CD4-positive, alpha-beta T cell (primary cell): ENCODE measurements at regions of chr1 and their contacts with region 1.

Region 1: DNA sequence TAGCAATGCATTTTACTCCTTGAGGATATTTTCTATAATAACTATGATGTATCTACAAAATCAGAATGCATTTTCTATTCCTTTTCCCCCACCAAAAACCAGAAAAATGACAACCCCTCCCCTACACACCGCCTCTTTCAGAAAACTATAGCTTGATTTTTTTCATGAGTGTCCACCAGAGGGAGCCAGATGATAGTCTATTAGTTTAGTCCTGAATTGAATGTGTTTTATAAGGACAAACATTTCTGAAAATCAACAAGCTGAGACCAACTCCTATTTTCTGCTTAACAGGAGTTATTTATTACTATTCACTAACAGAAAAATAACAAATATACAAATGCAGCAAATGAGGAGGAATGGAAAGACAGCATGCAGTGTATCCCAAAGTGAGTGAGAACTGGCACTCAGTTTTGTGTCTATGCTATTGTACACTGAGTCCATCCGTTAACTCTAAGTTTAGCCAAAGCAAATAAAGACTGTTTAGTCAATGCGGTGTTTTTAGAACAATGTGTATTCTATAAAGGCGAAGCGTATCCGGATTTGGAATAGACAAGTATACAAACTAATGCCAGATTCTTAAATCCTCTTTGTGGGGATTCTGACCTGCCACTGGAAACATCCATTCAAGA is 182.6 kb downstream of the VAV3 start:
- DNase-seq: peak in 8 of 14 experiments; percentile 16 to 84 (median 52)
- ATAC-seq: no peak
- H3K4me3 ChIP-seq: no peak overlapping the region
- H3K4me3 Mint-ChIP-seq: no peak overlapping the region
- H3K27ac ChIP-seq: no peak overlapping the region
- H3K27ac Mint-ChIP-seq: no peak overlapping the region
- H3K4me1 ChIP-seq: peaks cover 17% of the 10 kb centered on the region
- H3K4me1 Mint-ChIP-seq: peaks cover 30% of the 10 kb centered on the region
- H3K27me3 ChIP-seq: no peaks in the 10 kb centered on the region
- H3K27me3 Mint-ChIP-seq: no peaks in the 10 kb centered on the region
- CTCF ChIP-seq: peak; percentile 86

Region 2: DNA sequence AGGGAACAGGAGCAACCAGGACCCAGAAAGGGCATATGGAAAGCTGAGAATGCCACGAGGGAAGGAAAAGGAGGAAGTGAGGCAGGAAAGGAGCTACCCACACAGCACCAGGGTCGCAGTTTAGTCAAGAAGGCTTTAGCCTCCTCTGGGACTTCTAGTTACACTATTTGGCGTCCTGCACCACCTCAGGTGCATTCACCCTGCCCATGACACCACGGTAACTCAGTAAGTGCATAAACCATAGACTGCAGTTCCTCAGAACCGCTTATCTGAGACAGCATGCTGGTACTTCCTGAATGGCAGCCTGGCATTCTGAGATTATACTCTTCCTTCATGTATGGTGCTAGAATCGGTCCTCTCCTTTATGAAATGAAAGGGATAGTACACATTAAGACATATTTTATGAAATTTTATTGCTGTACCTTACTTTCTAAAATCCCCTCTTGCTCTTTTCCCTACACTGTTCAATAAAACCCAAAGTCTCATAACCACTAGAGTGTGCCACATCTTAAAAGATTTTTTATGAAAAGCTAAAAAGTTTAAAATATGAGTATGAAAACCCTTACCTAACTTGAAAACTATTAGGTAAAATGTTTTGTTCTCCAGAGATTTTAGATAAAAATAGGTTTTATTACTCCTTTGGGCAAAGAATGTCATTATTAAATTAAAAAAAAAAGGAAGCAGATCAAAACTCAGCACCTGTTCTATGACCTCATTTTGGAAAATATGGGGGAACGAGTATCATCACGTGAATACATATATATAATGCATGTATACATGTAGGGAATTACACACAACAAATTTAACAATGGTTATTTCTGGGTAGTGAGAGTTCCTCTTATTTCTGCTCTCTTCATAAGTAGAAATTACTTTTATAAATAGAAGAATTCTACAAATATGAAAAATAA is 115.4 kb after region 1 on chr1:
- CTCF ChIA-PET with region 1: no interaction called
- POLR2A ChIA-PET with region 1: no interaction called
- intact Hi-C with region 1: loop called (anchors 1 to 10 kb)
- DNase-seq: peak in 4 of 14 experiments; percentile 10 to 33 (median 20)
- ATAC-seq: peak; percentile 72
- H3K4me3 ChIP-seq: no peak overlapping the region
- H3K4me3 Mint-ChIP-seq: peak overlapping the region; percentile 56
- H3K27ac ChIP-seq: no peak overlapping the region
- H3K27ac Mint-ChIP-seq: peak overlapping the region; percentile 9
- H3K4me1 ChIP-seq: peaks cover 6% of the 10 kb centered on the region
- H3K4me1 Mint-ChIP-seq: peaks cover 39% of the 10 kb centered on the region
- H3K27me3 ChIP-seq: no peaks in the 10 kb centered on the region
- H3K27me3 Mint-ChIP-seq: no peaks in the 10 kb centered on the region
- CTCF ChIP-seq: no peak

Region 3: GRCh38 chr1:107963601-107964335 is 181.4 kb after region 1 on chr1:
- CTCF ChIA-PET with region 1: interaction called, 4 read pairs
- POLR2A ChIA-PET with region 1: interaction called, 7 read pairs
- intact Hi-C with region 1: loop called (anchors 1 to 5 kb)
- DNase-seq: peak in 11 of 14 experiments; percentile 10 to 72 (median 27)
- ATAC-seq: peak; percentile 64
- H3K4me3 ChIP-seq: peak overlapping the region; percentile 85
- H3K4me3 Mint-ChIP-seq: peak overlapping the region; percentile 91
- H3K27ac ChIP-seq: peak overlapping the region; percentile 6 to 48
- H3K27ac Mint-ChIP-seq: peak overlapping the region; percentile 91
- H3K4me1 ChIP-seq: peaks cover 23% of the 10 kb centered on the region
- H3K4me1 Mint-ChIP-seq: peaks cover 29% of the 10 kb centered on the region
- H3K27me3 ChIP-seq: no peaks in the 10 kb centered on the region
- H3K27me3 Mint-ChIP-seq: no peaks in the 10 kb centered on the region
- CTCF ChIP-seq: no peak

Region 4: DNA sequence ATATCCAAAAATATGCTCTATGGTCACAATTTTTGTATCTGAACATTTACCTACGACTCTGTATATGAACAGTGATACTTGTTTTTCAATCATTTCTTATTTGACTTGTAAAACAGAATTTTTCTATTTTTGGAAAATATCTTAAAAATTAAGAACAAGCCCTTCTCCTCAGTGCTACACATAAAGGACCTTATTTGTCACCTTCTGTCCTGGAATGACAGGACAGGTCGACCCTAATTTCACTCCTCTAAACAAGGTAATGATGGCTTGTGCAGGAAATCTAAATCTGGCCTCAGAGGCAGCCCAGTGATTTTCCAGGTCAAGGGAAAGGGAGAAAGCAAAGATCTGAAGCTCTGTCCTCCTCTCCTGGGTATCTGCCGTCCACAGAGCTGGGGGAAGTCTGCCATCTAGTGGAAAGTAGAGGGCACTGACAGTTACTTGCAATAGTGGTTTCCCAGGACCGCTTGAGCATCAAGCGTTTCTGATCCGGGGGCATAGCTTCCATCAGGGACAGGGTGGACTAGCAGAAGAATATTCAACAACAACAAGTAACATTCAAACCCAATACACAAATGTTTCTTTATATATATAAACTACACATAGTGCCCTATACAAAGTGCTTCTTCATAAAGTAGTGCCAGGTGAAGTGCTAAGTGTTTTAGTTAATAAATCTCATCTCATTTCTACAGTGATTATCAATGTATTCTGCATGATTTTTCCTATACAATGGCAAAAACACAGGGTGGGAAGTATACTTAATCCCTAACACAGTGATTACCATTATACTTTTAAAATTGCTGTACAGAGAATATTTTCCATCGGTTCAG is 343.2 kb after region 1 on chr1:
- CTCF ChIA-PET with region 1: interaction called, 152 read pairs
- POLR2A ChIA-PET with region 1: interaction called, 18 read pairs
- intact Hi-C with region 1: loop called (anchors 1 kb)
- DNase-seq: peak; percentile 42 to 85 (median 54)
- ATAC-seq: peak; percentile 93
- H3K4me3 ChIP-seq: no peak overlapping the region
- H3K4me3 Mint-ChIP-seq: no peak overlapping the region
- H3K27ac ChIP-seq: no peak overlapping the region
- H3K27ac Mint-ChIP-seq: no peak overlapping the region
- H3K4me1 ChIP-seq: peaks cover 3% of the 10 kb centered on the region
- H3K4me1 Mint-ChIP-seq: peaks cover 7% of the 10 kb centered on the region
- H3K27me3 ChIP-seq: no peaks in the 10 kb centered on the region
- H3K27me3 Mint-ChIP-seq: no peaks in the 10 kb centered on the region
- CTCF ChIP-seq: peak; percentile 92

Region 5: GRCh38 chr1:108643492-108644335 is 861.4 kb after region 1 on chr1:
- CTCF ChIA-PET with region 1: no interaction called
- POLR2A ChIA-PET with region 1: no interaction called
- intact Hi-C with region 1: loop called in 1 of 2 experiments (anchors 10 kb)
- DNase-seq: peak in 10 of 14 experiments; percentile 32 to 86 (median 48)
- ATAC-seq: peak; percentile 24
- H3K4me3 ChIP-seq: no peak overlapping the region
- H3K4me3 Mint-ChIP-seq: peak overlapping the region; percentile 25
- H3K27ac ChIP-seq: peak overlapping the region; percentile 18 to 74
- H3K27ac Mint-ChIP-seq: peak overlapping the region; percentile 96
- H3K4me1 ChIP-seq: peaks cover 61% of the 10 kb centered on the region
- H3K4me1 Mint-ChIP-seq: peaks cover 80% of the 10 kb centered on the region
- H3K27me3 ChIP-seq: no peaks in the 10 kb centered on the region
- H3K27me3 Mint-ChIP-seq: no peaks in the 10 kb centered on the region
- CTCF ChIP-seq: peak; percentile 77